ENCODE measurements at regions of chr4 and their contacts with region 1.

Region 1: GRCh38 chr4:71009890-71010588 is 16.6 kb downstream of the DCK start:
- DNase-seq: peak; percentile 50
- ATAC-seq: peak; percentile 74
- H3K4me3 ChIP-seq: no peak overlapping the region
- H3K27ac ChIP-seq: no peak overlapping the region
- H3K4me1 ChIP-seq: no peaks in the 10 kb centered on the region
- H3K27me3 ChIP-seq: no peaks in the 10 kb centered on the region
- CTCF ChIP-seq: peak; percentile 59
- EP300 ChIP-seq: no peak
- POLR2A ChIP-seq: no peak
- RAD21 ChIP-seq: no peak

Region 2: DNA sequence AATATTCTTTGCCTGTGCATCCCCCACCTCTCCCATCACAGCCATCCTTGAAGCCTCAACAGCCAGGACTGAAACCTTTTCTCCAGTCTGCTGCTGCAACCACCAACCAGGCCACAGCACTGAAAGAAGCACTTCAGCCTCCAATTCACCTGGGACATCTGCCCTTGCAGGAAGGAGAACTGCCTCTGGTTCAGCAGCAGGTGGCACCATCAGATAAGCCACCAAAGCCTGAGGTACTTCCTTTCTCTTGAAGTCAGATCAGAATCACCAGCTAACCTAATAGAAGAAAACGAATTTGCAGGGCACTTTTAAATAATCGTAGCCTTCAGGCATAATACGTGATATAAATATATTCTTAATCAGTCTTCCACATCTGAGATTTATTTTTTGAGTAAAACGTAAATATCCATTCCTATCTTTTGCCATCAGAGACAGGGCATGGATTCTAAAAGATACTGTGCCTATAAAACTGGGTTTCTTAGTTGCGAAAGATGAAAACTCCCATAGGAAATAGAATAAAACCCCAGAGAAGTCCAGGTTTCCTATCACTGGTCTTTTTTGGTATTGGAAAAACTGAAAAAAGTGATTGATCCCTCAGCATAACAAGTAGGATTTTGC is 408.5 kb before region 1 on chr4:
- CTCF ChIA-PET with region 1: interaction called, 3 read pairs
- POLR2A ChIA-PET with region 1: no interaction called
- in situ Hi-C with region 1: no loop called
- intact Hi-C with region 1: loop called (anchors 2 kb)
- DNase-seq: peak; percentile 62
- ATAC-seq: peak; percentile 95
- H3K4me3 ChIP-seq: no peak overlapping the region
- H3K27ac ChIP-seq: no peak overlapping the region
- H3K4me1 ChIP-seq: no peaks in the 10 kb centered on the region
- H3K27me3 ChIP-seq: no peaks in the 10 kb centered on the region
- CTCF ChIP-seq: peak; percentile 87
- EP300 ChIP-seq: no peak
- POLR2A ChIP-seq: no peak
- RAD21 ChIP-seq: peak; percentile 69

Region 3: DNA sequence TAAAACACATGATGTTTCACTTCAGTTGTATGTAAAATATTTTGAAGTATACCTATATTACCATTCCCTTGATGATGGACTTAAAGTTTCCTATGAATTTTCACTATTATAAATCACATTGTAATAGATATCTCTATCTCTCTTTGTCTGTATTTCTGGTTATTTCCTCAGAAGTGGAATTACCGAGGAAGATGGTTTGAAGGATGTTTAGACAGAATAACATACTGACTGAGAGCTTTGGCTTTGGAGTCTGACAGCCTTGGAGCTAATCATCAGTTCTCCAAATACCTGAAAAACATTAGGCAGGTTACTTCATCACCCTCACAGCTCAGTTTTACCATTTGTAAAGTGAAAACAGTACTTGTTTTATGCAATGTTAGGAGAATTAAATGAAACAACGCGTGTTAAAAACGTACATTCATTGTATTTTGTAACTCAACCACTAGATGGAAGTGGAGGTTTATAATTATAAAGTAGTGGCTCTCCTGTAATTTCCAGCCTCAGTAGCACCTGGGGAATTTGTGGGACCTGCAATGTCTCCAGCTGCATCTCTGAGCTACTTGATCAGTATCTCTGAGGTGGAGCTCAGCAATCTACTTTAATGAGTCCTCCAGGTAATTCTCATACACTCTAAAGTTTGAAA is 358.1 kb before region 1 on chr4:
- CTCF ChIA-PET with region 1: interaction called, 9 read pairs
- POLR2A ChIA-PET with region 1: no interaction called
- in situ Hi-C with region 1: loop called (anchors 25 kb)
- intact Hi-C with region 1: loop called (anchors 1 kb)
- DNase-seq: peak; percentile 27
- ATAC-seq: peak; percentile 79
- H3K4me3 ChIP-seq: no peak overlapping the region; a peak in 1 of 6 replicates
- H3K27ac ChIP-seq: no peak overlapping the region
- H3K4me1 ChIP-seq: peaks cover 7% of the 10 kb centered on the region; the same call in 1 of the 2 replicates
- H3K27me3 ChIP-seq: peaks cover 0 to 3% of the 10 kb centered on the region in 2 experiments; a peak in 1 of 5 replicates
- CTCF ChIP-seq: peak; percentile 70
- EP300 ChIP-seq: no peak
- POLR2A ChIP-seq: no peak
- RAD21 ChIP-seq: peak; percentile 58

Region 4: DNA sequence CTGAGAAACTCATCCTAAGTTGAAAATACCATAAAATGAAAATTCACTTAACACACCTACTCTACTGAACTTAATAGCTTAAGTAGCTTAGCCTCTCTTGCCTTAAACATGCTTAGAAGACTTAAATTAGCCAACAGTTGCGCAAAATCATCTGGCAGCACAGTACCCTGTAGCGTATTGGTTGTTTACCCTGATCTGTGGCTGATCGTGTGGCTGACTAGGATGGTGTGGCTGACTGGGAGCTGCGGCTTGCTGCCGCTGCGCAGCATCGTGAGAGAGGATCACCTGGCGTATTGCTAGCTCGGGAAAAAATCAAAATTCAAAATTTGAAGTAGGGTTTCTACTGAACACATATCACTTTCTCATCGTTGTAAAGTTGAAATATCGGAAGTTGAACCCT is 281.9 kb before region 1 on chr4:
- CTCF ChIA-PET with region 1: no interaction called
- POLR2A ChIA-PET with region 1: no interaction called
- in situ Hi-C with region 1: no loop called
- intact Hi-C with region 1: no loop called
- DNase-seq: no peak
- ATAC-seq: no peak
- H3K4me3 ChIP-seq: no peak overlapping the region
- H3K27ac ChIP-seq: no peak overlapping the region
- H3K4me1 ChIP-seq: no peaks in the 10 kb centered on the region
- H3K27me3 ChIP-seq: no peaks in the 10 kb centered on the region
- CTCF ChIP-seq: no peak
- EP300 ChIP-seq: no peak
- POLR2A ChIP-seq: no peak
- RAD21 ChIP-seq: no peak

Region 5: GRCh38 chr4:70855464-70855863 is 154.6 kb before region 1 on chr4:
- CTCF ChIA-PET with region 1: no interaction called
- POLR2A ChIA-PET with region 1: no interaction called
- in situ Hi-C with region 1: no loop called
- intact Hi-C with region 1: no loop called
- DNase-seq: no peak
- ATAC-seq: no peak
- H3K4me3 ChIP-seq: no peak overlapping the region
- H3K27ac ChIP-seq: no peak overlapping the region
- H3K4me1 ChIP-seq: no peaks in the 10 kb centered on the region
- H3K27me3 ChIP-seq: no peaks in the 10 kb centered on the region; a peak in 2 of 5 replicates
- CTCF ChIP-seq: no peak
- EP300 ChIP-seq: no peak
- POLR2A ChIP-seq: no peak
- RAD21 ChIP-seq: no peak

Region 6: GRCh38 chr4:70877556-70877955 is 132.5 kb before region 1 on chr4:
- CTCF ChIA-PET with region 1: no interaction called
- POLR2A ChIA-PET with region 1: no interaction called
- in situ Hi-C with region 1: no loop called
- intact Hi-C with region 1: loop called (anchors 1 kb)
- DNase-seq: no peak
- ATAC-seq: no peak
- H3K4me3 ChIP-seq: no peak overlapping the region
- H3K27ac ChIP-seq: no peak overlapping the region
- H3K4me1 ChIP-seq: no peaks in the 10 kb centered on the region
- H3K27me3 ChIP-seq: no peaks in the 10 kb centered on the region
- CTCF ChIP-seq: no peak
- EP300 ChIP-seq: no peak
- POLR2A ChIP-seq: no peak
- RAD21 ChIP-seq: no peak

Region 7: GRCh38 chr4:71107726-71108125 is 97.7 kb after region 1 on chr4:
- CTCF ChIA-PET with region 1: no interaction called
- POLR2A ChIA-PET with region 1: no interaction called
- in situ Hi-C with region 1: no loop called
- intact Hi-C with region 1: no loop called
- DNase-seq: no peak
- ATAC-seq: no peak
- H3K4me3 ChIP-seq: no peak overlapping the region
- H3K27ac ChIP-seq: no peak overlapping the region
- H3K4me1 ChIP-seq: no peaks in the 10 kb centered on the region
- H3K27me3 ChIP-seq: no peaks in the 10 kb centered on the region
- CTCF ChIP-seq: no peak
- EP300 ChIP-seq: no peak
- POLR2A ChIP-seq: no peak
- RAD21 ChIP-seq: no peak

Measured in HepG2 (cell line).